Naive thymus-derived CD4-positive, alpha-beta T cell (primary cell): ENCODE measurements at regions of chr4 and their contacts with region 1.

Region 1: DNA sequence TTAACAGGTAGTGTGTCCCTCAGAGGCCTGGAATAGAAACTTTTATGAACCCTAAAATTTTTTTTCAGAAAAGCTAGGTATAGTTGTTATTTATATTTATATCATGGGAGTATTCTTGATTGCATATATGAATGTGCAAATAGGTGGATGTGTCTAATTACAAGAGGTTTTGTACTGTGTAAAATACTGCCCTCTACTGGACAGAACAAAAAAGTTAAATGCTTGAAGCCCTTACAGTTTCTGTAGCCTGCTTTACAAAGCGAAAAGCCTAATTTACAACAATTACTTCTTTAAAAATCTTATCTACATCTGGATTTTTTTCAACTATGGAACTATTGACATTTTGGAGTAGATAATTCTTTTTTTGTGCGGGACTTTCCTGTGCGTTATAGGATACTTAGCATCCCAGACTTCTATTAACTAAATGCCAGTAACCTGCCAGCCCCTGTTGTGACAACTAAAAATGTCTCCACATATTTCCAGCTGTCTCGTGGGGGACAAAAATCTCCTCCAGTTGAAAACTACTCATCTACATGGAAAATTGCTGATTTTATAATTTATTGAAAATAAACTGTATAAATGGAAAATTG is 35.1 kb downstream of the ENPEP start:
- DNase-seq: peak in 7 of 9 donors; percentile 12 to 61 (median 48)
- ATAC-seq: peak; percentile 85
- H3K4me3 ChIP-seq: no peak overlapping the region
- H3K4me3 Mint-ChIP-seq: no peak overlapping the region
- H3K27ac ChIP-seq: no peak overlapping the region
- H3K27ac Mint-ChIP-seq: no peak overlapping the region
- H3K4me1 ChIP-seq: peaks cover 0 to 5% of the 10 kb centered on the region in 2 donors
- H3K4me1 Mint-ChIP-seq: peaks cover 4 to 12% (median 10%) of the 10 kb centered on the region in 7 donors
- H3K27me3 ChIP-seq: no peaks in the 10 kb centered on the region
- H3K27me3 Mint-ChIP-seq: peaks cover 0 to 6% (median 0%) of the 10 kb centered on the region in 5 donors

Region 2: DNA sequence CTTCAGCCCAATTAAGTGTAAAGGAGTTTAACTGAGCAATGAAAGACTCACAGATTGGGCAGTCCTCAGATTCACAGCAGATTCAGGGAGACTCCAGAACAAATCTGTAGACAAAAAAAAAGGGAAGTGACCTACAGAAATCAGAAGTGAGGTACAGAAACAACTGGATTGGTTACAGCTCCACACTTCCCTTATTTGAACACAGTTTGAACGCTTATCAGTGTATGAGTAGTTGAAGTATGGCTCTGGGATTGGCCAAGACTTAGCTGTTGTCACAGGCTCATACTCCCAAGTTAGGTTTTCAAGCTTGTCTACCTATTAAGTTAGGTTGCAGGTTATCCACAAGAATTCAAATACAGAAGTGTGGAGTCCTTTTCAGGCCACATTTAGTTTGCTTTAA is 200.3 kb before region 1 on chr4:
- CTCF ChIA-PET with region 1: no interaction called
- POLR2A ChIA-PET with region 1: no interaction called
- intact Hi-C with region 1: loop called in 1 of 2 experiments (anchors 1 kb)
- DNase-seq: no peak
- ATAC-seq: peak; percentile 72
- H3K4me3 ChIP-seq: no peak overlapping the region
- H3K4me3 Mint-ChIP-seq: no peak overlapping the region
- H3K27ac ChIP-seq: no peak overlapping the region
- H3K27ac Mint-ChIP-seq: peak overlapping the region in 1 of 9 donors; percentile 33
- H3K4me1 ChIP-seq: no peaks in the 10 kb centered on the region
- H3K4me1 Mint-ChIP-seq: no peaks in the 10 kb centered on the region
- H3K27me3 ChIP-seq: no peaks in the 10 kb centered on the region
- H3K27me3 Mint-ChIP-seq: peaks cover 10 to 25% (median 18%) of the 10 kb centered on the region in 5 donors

Region 3: DNA sequence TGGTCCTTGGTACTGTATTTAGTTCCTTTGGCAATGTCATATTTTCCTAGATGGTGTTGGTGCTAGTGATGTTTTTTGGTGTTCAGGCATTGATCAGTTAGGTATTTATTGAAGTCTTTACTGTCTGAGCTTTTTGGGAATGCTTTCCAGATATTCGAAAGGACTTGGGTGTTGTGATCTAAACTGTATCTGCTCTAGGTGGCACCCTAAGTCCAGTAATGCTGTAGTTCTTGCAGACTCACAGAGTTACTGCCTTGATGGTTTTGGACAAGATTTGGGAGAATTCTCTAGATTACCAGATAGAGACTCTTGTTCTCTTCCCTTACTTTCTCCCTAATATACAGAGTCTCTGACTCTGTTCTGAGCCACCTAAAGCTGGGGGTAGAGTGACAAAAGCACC is 625.4 kb after region 1 on chr4:
- CTCF ChIA-PET with region 1: no interaction called
- POLR2A ChIA-PET with region 1: no interaction called
- intact Hi-C with region 1: no loop called
- DNase-seq: no peak
- ATAC-seq: no peak
- H3K4me3 ChIP-seq: no peak overlapping the region
- H3K4me3 Mint-ChIP-seq: no peak overlapping the region
- H3K27ac ChIP-seq: no peak overlapping the region
- H3K27ac Mint-ChIP-seq: no peak overlapping the region
- H3K4me1 ChIP-seq: no peaks in the 10 kb centered on the region
- H3K4me1 Mint-ChIP-seq: no peaks in the 10 kb centered on the region
- H3K27me3 ChIP-seq: no peaks in the 10 kb centered on the region
- H3K27me3 Mint-ChIP-seq: no peaks in the 10 kb centered on the region